Kidney (tissue), 22 donors: ENCODE measurements at regions of chr5 and their contacts with region 1.

Region 1: DNA sequence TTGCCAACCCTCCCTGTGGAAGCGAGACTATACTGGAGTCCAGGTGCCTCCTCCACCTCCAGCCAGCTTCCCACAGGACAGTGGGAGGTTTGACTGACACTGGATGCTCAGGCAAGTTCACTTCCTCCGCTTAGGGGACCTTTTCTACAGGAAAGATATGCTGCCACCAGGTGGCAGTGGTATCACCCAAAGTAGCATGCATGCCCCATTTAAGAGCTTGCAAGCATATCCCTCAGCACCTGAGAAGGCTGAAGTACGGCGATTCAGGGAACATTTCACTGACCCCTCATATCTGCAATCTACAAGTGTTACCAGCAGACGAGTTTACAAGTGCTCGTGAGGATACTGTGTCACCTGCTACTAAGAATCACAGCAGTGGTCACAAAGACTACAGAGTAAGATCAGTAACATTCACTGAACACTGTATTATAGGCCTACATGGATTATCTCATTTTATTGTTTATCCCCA is 75.5 kb downstream of the KLHL3 start:
- DNase-seq: peak; percentile 51 to 89 (median 82)
- H3K4me3 ChIP-seq: peak overlapping the region in 1 of 3 donors; percentile 0
- H3K27ac ChIP-seq: no peak overlapping the region
- H3K4me1 ChIP-seq: peaks cover 0 to under 1% (median 0%) of the 10 kb centered on the region in 3 donors
- H3K27me3 ChIP-seq: no peaks in the 10 kb centered on the region
- CTCF ChIP-seq: peak; percentile 81

Region 2: GRCh38 chr5:137580030-137580429 is 80.4 kb before region 1 on chr5:
- intact Hi-C with region 1: no loop called
- DNase-seq: no peak
- H3K4me3 ChIP-seq: no peak overlapping the region
- H3K27ac ChIP-seq: no peak overlapping the region
- H3K4me1 ChIP-seq: peaks cover 0 to 4% (median 0%) of the 10 kb centered on the region in 3 donors
- H3K27me3 ChIP-seq: no peaks in the 10 kb centered on the region
- CTCF ChIP-seq: no peak

Region 3: GRCh38 chr5:137605411-137605810 is 55.0 kb before region 1 on chr5:
- intact Hi-C with region 1: no loop called
- DNase-seq: peak in 3 of 5 donors; percentile 65 to 77 (median 75)
- H3K4me3 ChIP-seq: no peak overlapping the region
- H3K27ac ChIP-seq: no peak overlapping the region
- H3K4me1 ChIP-seq: no peaks in the 10 kb centered on the region
- H3K27me3 ChIP-seq: no peaks in the 10 kb centered on the region
- CTCF ChIP-seq: no peak

Region 4: DNA sequence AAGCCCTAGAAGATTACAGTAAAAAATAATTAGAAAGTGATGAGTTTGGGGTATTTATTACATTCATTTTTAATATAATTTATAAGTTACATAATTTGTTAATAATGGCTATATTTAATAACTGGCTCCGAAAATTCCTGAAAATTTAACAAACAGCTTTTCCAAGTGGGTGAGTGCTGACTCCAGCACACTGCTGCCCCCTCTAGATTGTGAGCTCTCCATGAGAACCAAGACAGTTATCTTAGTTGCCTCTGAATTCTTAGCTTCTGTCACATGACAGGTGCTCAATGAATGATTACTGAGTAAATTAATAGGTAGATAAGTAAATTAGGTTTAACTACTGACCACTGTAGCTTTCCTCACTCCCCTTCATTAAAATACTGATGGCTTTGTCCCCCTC is 67.7 kb after region 1 on chr5:
- intact Hi-C with region 1: loop called (anchors 10 kb)
- DNase-seq: no peak
- H3K4me3 ChIP-seq: no peak overlapping the region
- H3K27ac ChIP-seq: no peak overlapping the region
- H3K4me1 ChIP-seq: peaks cover 0 to 7% (median 0%) of the 10 kb centered on the region in 3 donors
- H3K27me3 ChIP-seq: no peaks in the 10 kb centered on the region
- CTCF ChIP-seq: peak; percentile 14